IMR-90 (cell line): ENCODE measurements at regions of chr1 and their contacts with region 1.

Region 1: GRCh38 chr1:28877132-28877781 is 37.1 kb upstream of the EPB41 start:
- DNase-seq: peak; percentile 64
- ATAC-seq: peak; percentile 90
- H3K4me3 ChIP-seq: no peak overlapping the region
- H3K27ac ChIP-seq: no peak overlapping the region
- H3K4me1 ChIP-seq: no peaks in the 10 kb centered on the region
- H3K27me3 ChIP-seq: peaks cover 3% of the 10 kb centered on the region; the same call in 1 of the 2 replicates
- CTCF ChIP-seq: peak; percentile 97
- POLR2A ChIP-seq: peak; percentile 25; the same call in 1 of the 2 replicates
- RAD21 ChIP-seq: peak; percentile 98

Region 2: GRCh38 chr1:28642847-28643635 is 234.2 kb before region 1 on chr1 and contains the start of gene TAF12:
- CTCF ChIA-PET with region 1: interaction called, 5 read pairs
- POLR2A ChIA-PET with region 1: interaction called, 18 read pairs
- dilution Hi-C with region 1: no loop called
- in situ Hi-C with region 1: no loop called
- intact Hi-C with region 1: no loop called
- DNase-seq: peak; percentile 94
- ATAC-seq: peak; percentile 83
- H3K4me3 ChIP-seq: peak within 1 kb of the TSS; percentile 77
- H3K27ac ChIP-seq: peak within 1 kb of the TSS; percentile 94
- H3K4me1 ChIP-seq: peaks cover 1% of the 10 kb centered on the region
- H3K27me3 ChIP-seq: no peaks in the 10 kb centered on the region
- CTCF ChIP-seq: peak; percentile 51
- POLR2A ChIP-seq: peak; percentile 98
- RAD21 ChIP-seq: peak; percentile 44
- total RNA-seq, gene TAF12: 31.7 and 39.7 TPM in 2 replicates

Region 3: GRCh38 chr1:28736450-28737306 is 140.6 kb before region 1 on chr1 and contains the start of gene YTHDF2:
- CTCF ChIA-PET with region 1: no interaction called
- POLR2A ChIA-PET with region 1: no interaction called
- dilution Hi-C with region 1: no loop called
- in situ Hi-C with region 1: no loop called
- intact Hi-C with region 1: loop called (anchors 1 kb)
- DNase-seq: peak; percentile 96
- ATAC-seq: peak; percentile 95
- H3K4me3 ChIP-seq: peak within 1 kb of the TSS; percentile 93
- H3K27ac ChIP-seq: peak within 1 kb of the TSS; percentile 92
- H3K4me1 ChIP-seq: peaks cover 2% of the 10 kb centered on the region; the same call in 1 of the 2 replicates
- H3K27me3 ChIP-seq: no peaks in the 10 kb centered on the region
- CTCF ChIP-seq: peak; percentile 95
- POLR2A ChIP-seq: peak; percentile 87
- RAD21 ChIP-seq: peak; percentile 53
- total RNA-seq, gene YTHDF2: 88.3 and 94.3 TPM in 2 replicates

Region 4: DNA sequence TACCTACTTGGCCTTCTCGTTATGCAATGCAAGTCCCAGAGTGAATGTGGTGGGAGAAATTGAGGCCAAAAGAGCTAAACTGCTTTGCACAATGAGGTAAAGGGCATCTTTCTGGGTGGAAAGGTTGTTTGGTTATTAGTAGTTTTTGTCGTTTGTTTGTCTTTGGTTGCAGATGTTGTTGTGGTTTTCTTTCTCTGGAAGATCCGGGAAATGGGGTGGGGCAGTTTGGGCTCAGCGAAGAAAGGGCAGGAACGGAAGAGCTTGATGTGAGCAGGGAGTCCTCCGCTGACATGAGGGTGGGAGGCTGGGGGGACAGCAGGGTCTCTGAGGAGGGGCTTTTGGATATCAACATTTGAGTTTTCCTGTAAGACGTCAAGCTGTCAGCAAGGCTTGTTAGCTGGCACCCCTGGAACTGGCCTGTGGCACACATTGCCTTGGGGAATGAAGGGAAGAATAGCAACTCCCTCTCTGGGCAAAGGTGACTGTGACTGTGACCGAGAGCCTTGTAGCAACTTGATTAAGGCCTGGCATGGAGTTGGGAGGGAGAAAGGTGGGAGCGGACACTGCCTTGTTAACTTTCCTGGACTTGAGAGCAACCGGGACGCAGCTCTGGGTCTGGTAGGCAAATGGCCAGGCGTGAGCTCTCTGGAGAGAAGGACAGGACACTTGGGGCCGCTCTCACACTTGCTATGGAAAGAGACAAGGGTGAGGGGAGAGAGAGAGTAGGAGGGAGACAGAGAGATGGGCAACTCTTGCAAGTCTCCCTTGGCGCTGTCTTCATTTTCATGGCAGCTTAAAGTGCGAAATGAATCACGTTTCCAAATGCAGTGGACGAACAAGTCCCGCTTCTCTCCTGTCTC is 80.7 kb before region 1 on chr1:
- CTCF ChIA-PET with region 1: interaction called, 17 read pairs
- POLR2A ChIA-PET with region 1: no interaction called
- dilution Hi-C with region 1: no loop called
- in situ Hi-C with region 1: no loop called
- intact Hi-C with region 1: no loop called
- DNase-seq: no peak
- ATAC-seq: no peak
- H3K4me3 ChIP-seq: no peak overlapping the region
- H3K27ac ChIP-seq: no peak overlapping the region
- H3K4me1 ChIP-seq: no peaks in the 10 kb centered on the region
- H3K27me3 ChIP-seq: peaks cover 3% of the 10 kb centered on the region
- CTCF ChIP-seq: no peak
- POLR2A ChIP-seq: no peak
- RAD21 ChIP-seq: no peak

Region 5: GRCh38 chr1:29033829-29034466 is 156.7 kb after region 1 on chr1:
- CTCF ChIA-PET with region 1: interaction called, 133 read pairs
- POLR2A ChIA-PET with region 1: no interaction called
- dilution Hi-C with region 1: no loop called
- in situ Hi-C with region 1: loop called (anchors 5 kb)
- intact Hi-C with region 1: loop called (anchors 1 kb)
- DNase-seq: peak; percentile 56
- ATAC-seq: peak; percentile 78
- H3K4me3 ChIP-seq: no peak overlapping the region
- H3K27ac ChIP-seq: no peak overlapping the region
- H3K4me1 ChIP-seq: no peaks in the 10 kb centered on the region
- H3K27me3 ChIP-seq: no peaks in the 10 kb centered on the region
- CTCF ChIP-seq: peak; percentile 87
- POLR2A ChIP-seq: no peak
- RAD21 ChIP-seq: peak; percentile 96